HepG2 (cell line): ENCODE measurements at regions of chr22 and their contacts with region 1.

Region 1: GRCh38 chr22:50148991-50149721 is 21.4 kb upstream of the PANX2 start:
- DNase-seq: peak; percentile 46
- ATAC-seq: peak; percentile 37
- H3K4me3 ChIP-seq: no peak overlapping the region; a peak in 1 of 6 replicates
- H3K27ac ChIP-seq: no peak overlapping the region
- H3K4me1 ChIP-seq: peaks cover 70% of the 10 kb centered on the region
- H3K27me3 ChIP-seq: peaks cover 0 to 43% of the 10 kb centered on the region in 2 experiments; a peak in 4 of 5 replicates
- CTCF ChIP-seq: peak; percentile 92
- EP300 ChIP-seq: no peak
- POLR2A ChIP-seq: no peak
- RAD21 ChIP-seq: peak; percentile 92

Region 2: DNA sequence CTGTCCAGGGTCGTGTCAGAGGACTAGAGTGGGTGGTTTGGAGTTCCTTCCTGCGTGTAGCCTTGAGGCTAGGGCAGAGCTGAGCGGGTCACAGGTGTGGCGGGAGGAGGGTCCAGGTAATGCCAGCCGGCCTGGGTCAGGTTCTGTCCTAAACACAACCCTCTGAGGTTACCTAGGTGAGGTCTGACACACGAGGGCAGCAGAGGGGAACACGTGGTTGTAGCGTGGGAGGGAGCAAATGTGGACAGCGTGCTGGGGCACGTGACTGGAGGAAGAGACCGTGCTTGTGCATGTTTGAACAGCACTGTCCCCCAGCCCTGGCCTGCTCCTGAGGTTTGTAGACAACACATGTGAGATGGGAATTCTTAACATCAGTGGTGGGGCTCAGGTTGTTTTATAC is 46.2 kb before region 1 on chr22:
- CTCF ChIA-PET with region 1: no interaction called
- POLR2A ChIA-PET with region 1: no interaction called
- in situ Hi-C with region 1: no loop called
- intact Hi-C with region 1: loop called (anchors 5 kb)
- DNase-seq: peak; percentile 31
- ATAC-seq: peak; percentile 61; the same call in 2 of the 3 replicates
- H3K4me3 ChIP-seq: no peak overlapping the region
- H3K27ac ChIP-seq: no peak overlapping the region
- H3K4me1 ChIP-seq: peaks cover 7% of the 10 kb centered on the region; the same call in 1 of the 2 replicates
- H3K27me3 ChIP-seq: peaks cover 3 to 14% of the 10 kb centered on the region in 2 experiments; a peak in 4 of 5 replicates
- CTCF ChIP-seq: peak; percentile 59
- EP300 ChIP-seq: no peak
- POLR2A ChIP-seq: no peak
- RAD21 ChIP-seq: no peak

Region 3: GRCh38 chr22:50209893-50210292 is 60.7 kb after region 1 on chr22:
- CTCF ChIA-PET with region 1: interaction called, 39 read pairs
- POLR2A ChIA-PET with region 1: interaction called, 3 read pairs
- in situ Hi-C with region 1: loop called (anchors 5 kb)
- intact Hi-C with region 1: loop called (anchors 1 kb)
- DNase-seq: peak; percentile 47
- ATAC-seq: peak; percentile 64
- H3K4me3 ChIP-seq: no peak overlapping the region
- H3K27ac ChIP-seq: no peak overlapping the region
- H3K4me1 ChIP-seq: peaks cover 13% of the 10 kb centered on the region; the same call in 1 of the 2 replicates
- H3K27me3 ChIP-seq: no peaks in the 10 kb centered on the region
- CTCF ChIP-seq: peak; percentile 86
- EP300 ChIP-seq: no peak
- POLR2A ChIP-seq: 0 out of 4 replicates have a peak, but pooled peaks of 1 of the 2 experiments have one; percentile 21
- RAD21 ChIP-seq: peak; percentile 75